Endothelial cell of umbilical vein (primary cell): ENCODE measurements at regions of chr3 and their contacts with region 1.

Region 1: GRCh38 chr3:72738752-72739530 is 109.3 kb downstream of the SHQ1 start:
- DNase-seq: peak; percentile 37
- H3K4me3 ChIP-seq: peak overlapping the region in 2 of 3 experiments; percentile 18 to 25
- H3K27ac ChIP-seq: no peak overlapping the region
- H3K4me1 ChIP-seq: peaks cover 2% of the 10 kb centered on the region
- H3K27me3 ChIP-seq: no peaks in the 10 kb centered on the region
- CTCF ChIP-seq: no peak
- POLR2A ChIP-seq: no peak

Region 2: DNA sequence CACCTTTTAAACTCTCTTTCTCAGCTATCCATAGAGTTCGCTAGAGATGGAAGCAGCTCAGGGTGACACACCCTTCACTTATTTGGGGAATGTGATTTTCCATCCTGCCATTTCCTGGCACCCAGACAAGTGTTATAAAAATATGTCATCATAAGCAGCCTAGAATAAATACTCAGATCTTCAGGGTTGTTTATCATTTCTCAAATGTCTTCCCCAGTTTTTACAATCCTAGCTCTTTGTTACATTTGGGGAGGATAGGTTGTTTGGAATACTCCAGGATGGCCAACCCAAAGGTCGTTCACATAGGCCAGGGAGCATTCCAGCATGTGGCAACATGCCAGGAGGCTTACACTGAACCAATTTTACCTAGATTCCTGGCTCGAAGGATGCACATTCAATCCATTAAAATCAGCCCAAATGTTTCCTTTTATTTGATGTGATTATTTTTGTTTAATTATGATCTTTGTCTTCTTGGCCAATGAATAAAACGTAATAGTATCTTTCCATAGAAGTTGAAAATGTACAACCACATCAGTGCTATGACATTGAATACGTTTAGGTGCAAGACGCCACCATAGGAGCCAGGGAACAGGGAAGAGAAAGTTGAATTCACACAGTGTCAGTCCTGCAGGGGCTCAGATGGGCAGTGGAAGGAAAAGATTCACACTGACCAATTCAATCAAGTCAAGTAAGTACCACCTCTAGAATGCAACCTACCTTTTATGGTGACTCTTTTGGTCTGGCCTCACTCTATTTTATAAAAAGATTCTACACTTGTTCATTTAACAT is 1888.8 kb before region 1 on chr3:
- CTCF ChIA-PET with region 1: no interaction called
- POLR2A ChIA-PET with region 1: no interaction called
- dilution Hi-C with region 1: no loop called
- intact Hi-C with region 1: no loop called
- DNase-seq: peak; percentile 94
- H3K4me3 ChIP-seq: no peak overlapping the region
- H3K27ac ChIP-seq: peak overlapping the region; percentile 88
- H3K4me1 ChIP-seq: peaks cover 38% of the 10 kb centered on the region
- H3K27me3 ChIP-seq: no peaks in the 10 kb centered on the region
- CTCF ChIP-seq: no peak
- POLR2A ChIP-seq: no peak

Region 3: DNA sequence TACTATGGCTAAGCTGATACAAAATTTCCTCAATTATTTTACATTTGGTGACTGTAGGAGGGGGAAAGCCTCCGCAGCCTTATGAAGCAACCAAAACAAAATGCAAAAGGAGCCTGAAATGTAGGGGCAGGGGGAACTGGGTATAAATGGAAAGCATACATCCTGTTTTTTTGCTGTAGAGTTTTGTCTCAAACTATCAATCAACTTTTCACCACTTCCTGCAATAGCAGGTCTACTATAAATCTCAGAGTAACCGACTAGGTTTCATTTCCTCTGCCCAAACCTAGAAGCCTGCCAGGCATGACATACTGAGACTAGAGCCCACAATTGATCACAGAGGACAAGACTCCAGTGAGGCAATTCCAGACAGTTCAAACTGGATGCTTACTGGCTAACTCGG is 18.0 kb after region 1 on chr3:
- CTCF ChIA-PET with region 1: interaction called, 10 read pairs
- POLR2A ChIA-PET with region 1: no interaction called
- dilution Hi-C with region 1: no loop called
- intact Hi-C with region 1: no loop called
- DNase-seq: peak; percentile 67
- H3K4me3 ChIP-seq: no peak overlapping the region
- H3K27ac ChIP-seq: no peak overlapping the region
- H3K4me1 ChIP-seq: peaks cover 2% of the 10 kb centered on the region
- H3K27me3 ChIP-seq: no peaks in the 10 kb centered on the region
- CTCF ChIP-seq: no peak
- POLR2A ChIP-seq: no peak

Region 4: GRCh38 chr3:72847751-72848702 is 109.1 kb after region 1 on chr3 and contains the start of gene SHQ1:
- CTCF ChIA-PET with region 1: no interaction called
- POLR2A ChIA-PET with region 1: no interaction called
- dilution Hi-C with region 1: no loop called
- intact Hi-C with region 1: no loop called
- DNase-seq: peak; percentile 93
- H3K4me3 ChIP-seq: peak within 1 kb of the TSS; percentile 46 to 77 (median 76)
- H3K27ac ChIP-seq: peak within 1 kb of the TSS; percentile 4
- H3K4me1 ChIP-seq: peaks cover 16% of the 10 kb centered on the region
- H3K27me3 ChIP-seq: no peaks in the 10 kb centered on the region
- CTCF ChIP-seq: no peak
- POLR2A ChIP-seq: peak; percentile 67
- total RNA-seq, gene SHQ1: 19.7 and 20.6 TPM in 2 replicates